Right ventricle myocardium inferior (tissue), 1 donor: ENCODE measurements at regions of chr15 and their contacts with region 1.

Region 1: DNA sequence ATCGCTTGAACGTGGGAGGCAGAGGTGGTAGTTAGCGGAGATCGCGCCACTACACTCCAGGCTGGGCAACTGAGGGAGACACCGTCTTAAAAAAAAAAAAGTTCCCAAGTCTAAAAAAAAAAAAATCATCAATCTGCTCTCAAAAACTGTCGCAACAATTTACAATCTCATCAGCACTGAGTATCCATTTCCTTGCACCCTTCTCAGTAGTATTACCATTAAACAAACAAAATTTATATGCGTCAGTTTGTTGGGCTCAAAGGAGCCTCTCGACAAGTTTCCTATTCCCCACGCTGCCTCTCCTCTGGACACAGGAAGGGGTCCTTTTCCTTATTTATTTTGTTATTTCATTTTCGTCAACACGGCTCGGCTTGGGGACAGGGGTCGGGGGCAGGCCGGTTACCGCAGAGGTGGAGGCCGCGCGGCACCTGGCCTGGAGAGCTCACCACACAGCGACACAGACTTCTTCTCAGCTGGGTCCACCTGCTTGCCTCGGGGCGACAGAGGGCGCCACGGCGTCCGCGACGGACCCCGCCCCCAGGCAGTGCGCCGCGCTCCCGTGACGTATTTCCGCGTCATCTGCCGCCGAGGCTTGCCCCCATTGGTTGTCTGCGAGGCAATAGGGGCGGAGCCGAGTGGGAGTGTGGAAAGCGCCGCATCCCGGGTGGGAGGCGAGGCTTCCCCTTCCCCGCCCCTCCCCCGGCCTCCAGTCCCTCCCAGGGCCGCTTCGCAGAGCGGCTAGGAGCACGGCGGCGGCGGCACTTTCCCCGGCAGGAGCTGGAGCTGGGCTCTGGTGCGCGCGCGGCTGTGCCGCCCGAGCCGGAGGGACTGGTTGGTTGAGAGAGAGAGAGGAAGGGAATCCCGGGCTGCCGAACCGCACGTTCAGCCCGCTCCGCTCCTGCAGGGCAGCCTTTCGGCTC is at the start of gene MAP2K1:
- DNase-seq: peak; percentile 99
- ATAC-seq: peak; percentile 99
- total RNA-seq, gene MAP2K1: 47.3 TPM

Region 2: DNA sequence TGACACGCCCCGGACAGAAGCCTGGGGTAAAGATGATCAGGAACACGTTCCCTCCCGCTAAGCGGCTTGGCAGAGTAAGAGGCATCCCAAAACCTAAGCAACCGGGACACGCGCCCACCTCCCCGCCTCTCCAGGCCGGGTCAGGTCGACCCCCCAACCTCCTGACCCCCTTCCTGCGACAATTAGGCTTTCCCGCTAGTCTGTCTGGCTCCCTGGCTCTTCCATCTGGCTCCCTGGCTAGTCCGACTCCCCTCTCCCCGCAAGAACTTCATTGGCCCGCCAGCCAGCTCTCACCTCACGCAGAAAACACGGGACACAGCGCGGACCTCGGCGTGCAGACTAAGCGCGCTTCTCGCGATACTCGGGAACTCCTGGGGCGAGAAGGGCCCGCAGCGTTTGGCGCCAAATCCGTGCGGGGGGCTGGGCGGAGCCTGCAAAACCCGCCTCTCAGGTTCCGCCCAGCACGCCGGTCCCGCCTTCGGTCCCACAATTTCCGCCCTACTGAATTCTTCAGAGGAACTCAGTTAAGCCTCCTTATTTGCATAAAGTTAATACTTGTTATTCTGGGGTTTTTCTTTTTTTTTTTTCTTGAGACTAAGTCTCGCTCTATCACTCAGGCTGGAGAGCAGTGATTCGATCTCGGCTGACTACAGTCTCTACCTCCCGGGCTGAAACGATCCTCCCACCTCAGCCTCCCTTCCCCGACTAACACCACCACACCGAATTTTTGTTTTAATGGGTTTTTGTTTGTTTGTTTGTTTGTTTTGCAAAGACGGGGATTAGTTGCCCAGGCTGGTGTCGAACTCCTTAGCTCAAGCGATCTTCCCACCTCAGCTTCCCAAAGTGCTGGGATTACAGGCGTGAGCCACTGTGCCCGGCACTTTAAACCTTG is 29.9 kb before region 1 on chr15 and contains the start of gene TIPIN:
- intact Hi-C with region 1: loop called (anchors 2 kb)
- DNase-seq: peak; percentile 97
- ATAC-seq: peak; percentile 98
- total RNA-seq, gene TIPIN: 2.8 TPM

Region 3: DNA sequence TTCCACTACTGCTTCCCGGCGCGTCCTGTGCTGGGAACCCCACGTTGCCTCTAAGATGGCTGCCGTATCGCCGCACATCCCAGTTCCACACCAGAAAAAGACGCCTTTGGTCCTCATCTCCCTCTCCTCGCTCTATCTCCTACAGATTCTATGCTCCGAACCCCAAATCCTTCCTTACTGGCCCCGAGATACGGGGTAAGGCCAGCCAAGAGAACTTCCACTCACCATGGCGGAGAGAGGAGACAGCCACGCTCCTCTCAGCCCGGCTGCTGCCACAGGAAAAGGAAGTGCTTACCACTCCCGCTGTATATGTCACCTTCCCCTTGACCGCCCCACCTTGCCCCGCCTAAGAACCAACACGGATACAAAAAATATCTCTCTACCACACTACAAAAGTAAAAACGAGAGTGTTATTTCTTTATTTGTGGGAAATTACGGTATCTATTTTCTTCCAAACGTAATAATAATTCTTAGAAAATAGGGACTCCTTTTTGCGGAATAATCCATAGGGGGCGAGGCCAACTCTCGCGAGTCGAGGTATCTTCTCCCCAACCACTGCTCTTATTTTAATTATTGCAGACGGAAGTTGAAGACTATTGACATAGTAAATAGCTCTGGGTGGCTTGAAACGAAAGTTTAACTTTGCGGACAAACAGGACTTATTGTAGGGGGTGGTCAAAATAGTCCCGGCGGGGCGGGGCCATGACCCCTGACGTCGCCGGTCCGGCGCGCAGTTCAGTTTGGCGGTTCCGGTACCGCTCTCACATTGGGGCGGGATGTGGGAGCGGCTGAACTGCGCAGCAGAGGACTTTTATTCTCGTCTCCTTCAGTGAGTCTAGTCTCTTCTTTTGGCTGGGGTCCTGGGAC is 118.3 kb after region 1 on chr15 and contains the starts of genes RPL4 and ZWILCH:
- intact Hi-C with region 1: loop called (anchors 2 kb)
- DNase-seq: peak; percentile 91
- ATAC-seq: peak; percentile 95
- total RNA-seq, gene RPL4: 1,478 TPM
- total RNA-seq, gene ZWILCH: 2.1 TPM